GM12878 (cell line): ENCODE measurements at regions of chr19 and their contacts with region 1.

Region 1: DNA sequence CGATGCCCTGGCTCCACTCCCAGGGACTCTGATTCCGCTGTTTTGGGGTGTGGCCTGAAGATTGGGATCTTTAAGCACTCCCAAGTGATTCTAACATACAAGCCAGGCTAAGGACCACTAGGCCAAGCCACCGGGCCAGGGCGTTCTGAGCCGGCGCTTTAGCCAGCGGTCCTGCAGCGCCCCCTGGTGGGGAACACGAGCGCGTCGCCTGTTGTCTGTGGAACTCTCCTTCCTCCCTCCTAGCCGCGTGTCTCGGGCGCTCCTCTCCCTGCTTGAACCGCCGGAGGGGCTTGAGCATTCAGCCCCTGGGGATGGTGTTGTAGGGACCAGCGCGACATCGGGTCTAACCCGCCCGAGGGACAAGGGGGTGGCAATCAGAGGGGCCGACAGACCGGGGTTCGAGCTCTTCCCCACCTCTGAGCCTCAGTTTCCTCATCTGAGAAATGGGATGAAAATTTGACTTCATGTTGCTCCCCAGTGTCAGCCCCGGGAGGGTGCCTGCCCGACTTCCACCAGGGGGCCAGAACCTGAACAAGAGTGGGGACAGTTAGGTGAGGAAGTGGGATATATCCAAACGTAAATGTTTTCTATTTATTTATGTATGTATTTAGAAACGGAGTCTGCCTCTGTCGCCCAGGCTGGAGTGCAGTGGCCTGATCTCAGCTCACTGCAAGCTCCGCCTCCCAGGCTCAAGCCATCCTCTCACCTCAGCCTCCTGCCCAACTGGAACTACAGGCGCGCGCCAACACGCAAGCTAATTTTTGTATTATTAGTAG is 18.0 kb upstream of the PNMA8B start:
- DNase-seq: no peak
- ATAC-seq: peak; percentile 95
- H3K4me3 ChIP-seq: no peak overlapping the region
- H3K27ac ChIP-seq: no peak overlapping the region
- H3K4me1 ChIP-seq: no peaks in the 10 kb centered on the region
- H3K27me3 ChIP-seq: no peaks in the 10 kb centered on the region; a peak in 1 of 4 replicates
- CTCF ChIP-seq: peak; percentile 86 to 95 (median 86)
- EP300 ChIP-seq: no peak
- POLR2A ChIP-seq: no peak
- RAD21 ChIP-seq: peak; percentile 73

Region 2: DNA sequence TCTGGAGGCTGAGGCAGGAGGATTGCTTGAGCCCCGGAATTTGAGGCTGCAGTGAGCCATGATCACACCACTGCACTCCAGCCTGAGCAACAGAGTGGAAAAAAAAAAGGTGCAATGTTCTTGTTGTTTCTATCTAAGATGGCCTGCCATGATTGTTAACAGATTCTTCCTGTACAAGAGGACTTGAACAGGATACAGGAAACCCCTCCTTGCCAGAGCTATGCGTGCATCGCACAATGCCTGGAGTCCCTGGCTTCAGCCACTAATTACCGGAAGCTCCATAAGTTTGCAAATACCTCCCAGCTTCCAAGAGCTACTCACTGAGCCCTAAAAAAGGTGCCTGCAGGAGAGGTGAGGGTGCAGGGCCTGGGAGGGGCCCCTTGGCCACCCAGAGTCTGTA is 229.9 kb before region 1 on chr19:
- CTCF ChIA-PET with region 1: interaction called, 14 read pairs
- POLR2A ChIA-PET with region 1: no interaction called
- RAD21 ChIA-PET with region 1: interaction called, 4 read pairs
- SMC1A ChIA-PET with region 1: no interaction called
- in situ Hi-C with region 1: no loop called
- intact Hi-C with region 1: no loop called
- DNase-seq: no peak
- ATAC-seq: no peak
- H3K4me3 ChIP-seq: no peak overlapping the region
- H3K27ac ChIP-seq: no peak overlapping the region
- H3K4me1 ChIP-seq: no peaks in the 10 kb centered on the region
- H3K27me3 ChIP-seq: no peaks in the 10 kb centered on the region
- CTCF ChIP-seq: no peak
- EP300 ChIP-seq: no peak
- POLR2A ChIP-seq: no peak
- RAD21 ChIP-seq: no peak

Region 3: GRCh38 chr19:46542428-46543230 is 29.0 kb after region 1 on chr19:
- CTCF ChIA-PET with region 1: interaction called, 33 read pairs
- POLR2A ChIA-PET with region 1: no interaction called
- RAD21 ChIA-PET with region 1: interaction called, 3 read pairs
- SMC1A ChIA-PET with region 1: interaction called, 3 read pairs
- in situ Hi-C with region 1: no loop called
- intact Hi-C with region 1: no loop called
- DNase-seq: no peak
- ATAC-seq: peak; percentile 81
- H3K4me3 ChIP-seq: no peak overlapping the region
- H3K27ac ChIP-seq: no peak overlapping the region
- H3K4me1 ChIP-seq: no peaks in the 10 kb centered on the region
- H3K27me3 ChIP-seq: no peaks in the 10 kb centered on the region; a peak in 2 of 4 replicates
- CTCF ChIP-seq: peak; percentile 75 to 77 (median 77)
- EP300 ChIP-seq: no peak
- POLR2A ChIP-seq: no peak
- RAD21 ChIP-seq: peak; percentile 64